KBM-7 (cell line): ENCODE measurements at regions of chr7 and their contacts with region 1.

Region 1: DNA sequence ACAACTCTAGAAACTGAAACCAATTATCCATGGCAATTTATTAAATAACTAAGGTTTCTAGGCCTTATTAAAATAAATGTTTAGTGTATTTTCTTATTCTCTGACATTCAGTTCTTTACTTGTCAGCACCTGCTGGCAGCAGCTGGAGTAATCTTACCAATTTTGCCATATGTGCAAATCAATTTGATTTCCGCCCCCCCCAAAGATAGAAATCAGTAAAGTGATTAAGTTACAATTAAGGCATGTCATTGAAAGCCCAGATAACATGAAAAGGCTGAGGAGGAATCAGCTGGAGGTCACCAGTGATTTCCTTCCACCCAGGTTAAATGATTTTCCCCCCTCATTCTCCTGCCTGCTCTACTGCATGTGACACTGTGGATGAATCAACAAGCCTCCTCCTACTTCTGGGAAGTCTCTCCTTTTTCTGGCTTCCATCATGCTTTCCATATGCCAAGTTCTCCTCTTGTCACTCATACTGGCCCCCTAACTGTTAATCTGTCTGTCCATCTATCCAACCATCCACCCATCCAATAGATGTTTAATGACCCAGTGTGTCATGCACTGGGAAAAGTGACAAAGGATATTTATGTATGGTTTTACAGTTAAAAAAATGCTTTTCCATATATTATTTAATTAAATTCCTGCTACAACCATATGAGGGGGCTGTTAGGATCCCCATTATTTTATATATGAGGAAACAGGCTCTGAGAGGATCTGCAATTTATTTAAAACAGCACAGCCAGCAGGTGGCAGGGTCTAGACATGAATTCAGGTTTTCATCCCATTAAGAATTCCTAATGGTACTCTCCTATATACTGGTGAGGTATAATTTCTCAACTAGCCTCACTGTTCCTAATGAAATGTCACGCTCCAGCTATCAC is 116.5 kb downstream of the ATXN7L1 start:
- DNase-seq: peak; percentile 28

Region 2: DNA sequence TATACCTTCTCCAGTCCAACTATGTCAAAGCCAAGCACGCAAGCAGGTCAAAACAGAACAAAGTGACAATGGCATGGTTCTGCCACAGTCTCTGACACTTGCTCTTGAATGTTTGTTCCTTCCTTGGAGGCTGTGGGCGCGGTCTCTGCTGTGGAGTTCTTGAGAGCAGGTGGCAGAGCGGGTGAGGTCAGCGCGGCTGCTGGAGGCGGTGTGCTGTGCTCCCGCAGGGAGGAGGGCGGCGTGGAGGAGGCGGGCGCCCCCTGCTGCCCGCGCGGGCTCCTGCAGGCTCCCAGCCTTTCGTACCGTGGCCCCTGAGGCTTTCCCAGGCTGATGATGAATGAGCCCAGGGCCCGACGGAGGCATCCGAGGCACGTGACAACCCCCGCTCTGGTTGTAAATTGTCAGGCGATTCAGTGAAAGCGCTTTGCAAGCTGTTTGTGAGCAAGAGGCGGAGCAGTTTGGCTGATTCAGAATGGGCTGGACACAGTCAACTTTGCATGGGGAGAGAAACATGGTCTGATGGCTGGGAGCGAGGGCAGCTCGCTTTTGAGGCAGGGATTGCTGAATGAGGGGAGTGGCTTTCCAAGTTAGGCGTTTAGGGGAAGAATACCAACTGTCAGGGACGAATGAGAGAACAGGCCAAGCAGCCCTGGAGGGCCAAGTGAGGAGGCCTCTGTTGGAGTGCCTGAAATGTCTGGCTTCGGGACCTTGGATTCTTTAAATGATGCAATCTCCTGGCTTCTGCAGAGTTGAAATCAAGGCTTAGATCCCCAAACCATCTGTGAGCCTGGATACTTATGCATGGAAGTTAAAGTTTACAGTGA is 249.7 kb after region 1 on chr7:
- in situ Hi-C with region 1: loop called (anchors 25 kb)
- DNase-seq: peak; percentile 90

Region 3: DNA sequence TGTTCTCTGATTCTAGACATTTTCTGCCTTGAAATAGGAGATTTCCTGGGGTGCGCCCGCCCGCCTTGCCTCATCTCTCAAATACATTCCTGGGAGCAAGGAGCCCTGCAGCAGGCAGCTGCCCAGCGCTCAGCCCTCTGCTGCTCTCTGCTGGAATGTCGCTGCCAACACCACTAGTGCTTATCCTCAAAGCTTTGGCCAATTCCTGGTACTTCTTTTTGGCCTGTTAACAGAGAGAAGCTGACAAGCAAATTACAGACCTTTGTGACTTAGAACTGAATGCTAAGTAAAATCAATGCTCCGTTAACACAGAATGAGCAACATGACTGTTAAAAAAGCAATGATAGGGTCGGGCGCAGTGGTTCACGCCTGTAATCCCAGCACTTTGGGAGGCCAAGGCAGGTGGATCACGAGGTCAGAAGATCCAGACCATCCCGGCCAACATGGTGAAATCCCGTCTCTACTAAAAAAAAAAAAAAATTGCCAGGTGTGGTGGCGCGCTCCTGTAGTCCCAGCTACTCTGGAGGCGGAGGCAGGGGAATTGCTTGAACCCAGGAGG is 394.1 kb after region 1 on chr7:
- in situ Hi-C with region 1: loop called (anchors 25 kb)
- DNase-seq: peak; percentile 86